ENCODE measurements at regions of chr5 and their contacts with region 1.

Region 1: DNA sequence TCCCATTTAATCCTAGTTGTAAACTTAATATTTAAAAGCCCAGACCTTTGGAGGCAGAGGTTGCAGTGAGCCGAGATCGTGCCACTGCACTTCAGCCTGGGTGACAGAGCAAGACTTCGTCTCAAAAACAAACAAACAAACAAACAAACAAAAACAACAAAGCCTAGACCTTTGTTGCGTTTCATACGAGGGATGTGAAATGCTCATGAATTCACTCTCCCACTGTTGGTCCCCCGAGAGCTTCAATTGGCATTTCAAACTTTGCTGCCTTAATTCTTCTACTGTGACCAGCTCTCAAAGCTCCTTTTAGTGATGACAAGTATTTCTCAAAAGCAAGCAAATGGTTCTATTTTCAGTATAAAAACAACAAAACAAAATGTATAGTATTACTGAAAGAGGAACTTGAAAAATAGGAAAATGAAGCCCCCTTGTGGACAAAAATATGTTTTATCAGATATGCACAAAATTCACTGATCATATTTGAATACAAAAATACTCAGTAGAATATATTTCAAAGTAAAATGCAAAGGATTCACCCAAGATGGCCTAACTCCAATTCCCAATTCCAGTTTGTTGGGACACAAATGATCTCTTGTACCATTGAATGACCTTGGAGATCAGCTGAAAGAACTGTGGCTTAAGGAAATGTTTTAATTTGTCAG is 140.4 kb downstream of the ESM1 start:
- DNase-seq: no peak
- ATAC-seq: peak; percentile 74
- H3K4me3 ChIP-seq: no peak overlapping the region
- H3K27ac ChIP-seq: peak overlapping the region in 1 of 2 donors; percentile 79
- H3K4me1 ChIP-seq: peaks cover 0 to 3% of the 10 kb centered on the region in 2 donors
- H3K27me3 ChIP-seq: no peaks in the 10 kb centered on the region

Region 2: DNA sequence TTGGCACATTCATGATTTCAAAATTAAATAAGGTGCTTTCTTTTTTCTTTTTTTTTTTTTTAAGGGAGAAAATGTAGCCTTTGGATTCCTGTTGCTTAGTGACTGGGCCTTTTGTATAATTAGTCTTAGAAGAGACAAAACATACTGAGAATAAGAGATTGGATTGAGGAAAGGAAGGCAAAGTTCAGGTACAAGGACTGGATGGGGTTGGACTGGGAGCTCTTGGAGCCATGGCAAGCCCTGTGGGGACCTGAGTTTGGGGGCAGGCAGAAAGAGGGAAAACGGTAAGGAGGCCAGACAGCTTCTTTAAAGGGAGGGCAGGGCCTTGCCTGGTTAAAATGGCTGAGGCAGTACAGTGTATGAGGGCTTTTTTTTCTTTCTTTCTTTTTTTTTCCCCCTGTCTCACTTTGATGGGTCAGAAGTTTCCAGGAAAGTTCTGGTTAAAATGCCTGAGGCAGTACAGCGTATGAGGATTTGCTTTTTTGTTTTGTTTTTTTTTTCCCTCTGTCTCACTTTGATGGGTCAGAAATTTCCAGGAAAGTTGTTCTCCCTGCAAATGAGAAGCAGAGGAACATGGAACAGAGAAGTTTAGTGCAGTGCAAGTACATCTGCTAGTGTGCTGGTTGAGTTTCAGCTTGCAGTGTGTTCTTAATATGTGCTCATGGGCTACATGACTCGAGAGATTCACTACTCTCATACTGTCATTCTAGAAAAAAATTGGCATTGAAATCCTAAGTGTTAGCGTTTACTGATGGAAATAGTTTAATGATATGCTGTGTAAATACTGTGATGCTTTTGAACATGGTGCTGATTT is 310.6 kb before region 1 on chr5:
- intact Hi-C with region 1: loop called in 1 of 2 experiments (anchors 5 kb)
- DNase-seq: no peak
- ATAC-seq: no peak
- H3K4me3 ChIP-seq: no peak overlapping the region
- H3K27ac ChIP-seq: peak overlapping the region; percentile 66 to 69
- H3K4me1 ChIP-seq: peaks cover 5 to 17% of the 10 kb centered on the region in 2 donors
- H3K27me3 ChIP-seq: no peaks in the 10 kb centered on the region

Region 3: DNA sequence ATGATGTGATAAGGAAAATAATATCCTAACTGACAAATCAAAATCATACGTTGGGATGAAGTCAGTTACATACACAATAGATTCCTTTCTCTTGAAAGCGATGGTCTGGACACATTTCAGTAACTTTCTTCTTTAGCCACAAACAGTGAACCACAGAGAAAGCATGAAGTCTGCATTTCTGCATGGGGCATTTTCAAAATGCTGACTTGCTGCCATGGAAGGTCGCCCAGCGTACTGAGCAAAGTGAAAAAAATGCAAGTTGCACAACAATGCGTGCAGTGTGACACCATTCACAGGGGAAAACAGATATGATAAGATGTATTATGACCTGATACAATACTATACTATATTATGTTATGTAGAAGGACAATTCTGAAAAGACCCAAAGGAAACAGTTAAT is 181.2 kb before region 1 on chr5:
- intact Hi-C with region 1: loop called in 1 of 2 experiments (anchors 5 kb)
- DNase-seq: peak; percentile 72 to 80
- ATAC-seq: peak; percentile 75
- H3K4me3 ChIP-seq: no peak overlapping the region
- H3K27ac ChIP-seq: no peak overlapping the region
- H3K4me1 ChIP-seq: no peaks in the 10 kb centered on the region
- H3K27me3 ChIP-seq: no peaks in the 10 kb centered on the region